Right ventricle myocardium inferior (tissue), 1 donor: ENCODE measurements at regions of chr19 and their contacts with region 1.

Region 1: GRCh38 chr19:29714953-29715700 is at the start of gene C19orf12:
- DNase-seq: peak; percentile 80
- ATAC-seq: peak; percentile 82
- total RNA-seq, gene C19orf12: 64.2 TPM

Region 2: GRCh38 chr19:29610563-29611271 is 104.4 kb before region 1 on chr19:
- intact Hi-C with region 1: loop called (anchors 1 kb)
- DNase-seq: peak; percentile 78
- ATAC-seq: peak; percentile 84